ENCODE measurements at regions of chr3 and their contacts with region 1.

Region 1: DNA sequence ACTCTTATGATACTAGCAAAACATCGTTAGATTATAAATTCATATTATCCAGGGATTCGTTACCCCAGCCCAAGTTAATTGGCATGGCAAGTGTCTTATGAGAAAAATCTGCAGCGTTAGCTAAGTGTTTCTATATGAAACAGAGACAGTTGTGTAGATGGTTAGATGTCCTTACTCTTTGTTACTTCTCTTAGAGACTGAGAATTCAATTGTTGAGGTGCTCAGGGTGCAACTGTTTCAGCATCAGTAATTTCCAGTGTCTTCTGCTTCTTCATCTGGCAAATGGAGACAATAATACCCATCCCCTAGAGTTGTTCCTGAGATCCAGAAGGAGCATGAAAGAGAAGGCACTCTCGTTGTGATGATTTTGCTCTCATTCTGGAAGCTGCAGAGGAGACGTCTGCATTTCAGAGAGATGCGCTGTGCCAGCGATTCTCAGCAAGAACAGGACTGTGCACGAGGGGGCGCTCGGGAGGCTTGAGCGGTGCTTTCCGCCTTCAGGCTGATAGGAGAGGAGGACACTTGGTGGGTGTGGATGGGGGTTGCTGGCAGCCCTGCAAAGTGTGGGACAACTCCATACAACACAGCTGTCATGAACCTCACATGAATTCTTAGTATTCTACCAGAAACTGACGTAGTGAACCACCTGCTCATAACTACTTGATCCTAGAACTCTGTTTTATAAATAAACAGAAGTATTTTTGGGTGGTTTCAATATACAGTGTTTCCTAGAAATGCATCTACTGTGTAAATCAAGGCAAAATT is 39.7 kb upstream of the SPSB4 start:
- DNase-seq: peak; percentile 84
- ATAC-seq: peak; percentile 85 to 87
- H3K4me3 ChIP-seq: no peak overlapping the region
- H3K27ac ChIP-seq: no peak overlapping the region
- H3K4me1 ChIP-seq: no peaks in the 10 kb centered on the region
- H3K27me3 ChIP-seq: no peaks in the 10 kb centered on the region
- CTCF ChIP-seq: peak; percentile 69

Region 2: GRCh38 chr3:140378571-140379340 is 632.7 kb before region 1 on chr3:
- intact Hi-C with region 1: no loop called
- DNase-seq: no peak
- ATAC-seq: no peak
- H3K4me3 ChIP-seq: no peak overlapping the region
- H3K27ac ChIP-seq: no peak overlapping the region
- H3K4me1 ChIP-seq: no peaks in the 10 kb centered on the region
- H3K27me3 ChIP-seq: no peaks in the 10 kb centered on the region
- CTCF ChIP-seq: no peak

Region 3: DNA sequence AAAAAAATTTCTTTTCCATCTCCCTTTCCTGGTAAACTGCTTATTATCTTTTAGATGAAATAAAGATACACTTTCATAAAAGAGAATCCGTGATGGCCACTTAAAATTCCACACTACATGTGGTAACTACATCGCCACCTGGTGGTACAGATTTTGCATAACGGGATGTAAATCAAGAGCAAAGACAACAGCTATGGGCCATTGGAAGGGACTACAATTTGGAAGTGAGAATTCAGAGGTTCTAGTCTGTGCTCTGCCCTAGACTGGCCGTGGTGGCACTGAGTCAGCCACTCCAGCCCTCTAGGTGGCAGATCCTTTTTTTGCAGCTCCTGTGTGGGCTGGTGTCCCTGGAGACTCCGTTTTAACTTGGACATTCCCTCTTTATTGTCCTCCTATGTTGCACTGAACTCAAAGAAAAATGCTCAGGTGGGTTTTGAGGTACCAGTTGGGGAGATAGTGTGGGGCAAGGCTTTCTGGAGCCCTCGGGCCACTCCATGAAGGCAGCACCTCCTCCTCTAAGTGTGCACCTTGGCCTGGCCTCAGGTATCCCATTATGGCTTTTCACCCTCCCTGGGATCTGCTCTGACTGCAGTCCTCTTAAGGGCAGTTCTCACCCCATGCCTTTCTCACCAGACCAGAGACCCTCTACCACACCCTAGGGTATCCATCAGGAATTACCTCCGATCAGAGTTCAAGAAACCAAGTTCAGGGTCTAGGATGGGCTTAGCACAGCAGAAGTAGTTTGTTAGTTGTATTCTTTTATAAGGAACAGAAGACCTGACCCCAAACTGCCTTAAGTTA is 94.6 kb after region 1 on chr3:
- intact Hi-C with region 1: loop called (anchors 10 kb)
- DNase-seq: no peak
- ATAC-seq: peak; percentile 39 to 66
- H3K4me3 ChIP-seq: no peak overlapping the region
- H3K27ac ChIP-seq: no peak overlapping the region
- H3K4me1 ChIP-seq: no peaks in the 10 kb centered on the region
- H3K27me3 ChIP-seq: no peaks in the 10 kb centered on the region
- CTCF ChIP-seq: peak; percentile 76

Region 4: GRCh38 chr3:141116721-141117120 is 105.3 kb after region 1 on chr3:
- intact Hi-C with region 1: no loop called
- DNase-seq: no peak
- ATAC-seq: peak in 1 of 2 donors; percentile 34
- H3K4me3 ChIP-seq: no peak overlapping the region
- H3K27ac ChIP-seq: no peak overlapping the region
- H3K4me1 ChIP-seq: no peaks in the 10 kb centered on the region
- H3K27me3 ChIP-seq: no peaks in the 10 kb centered on the region
- CTCF ChIP-seq: no peak

Region 5: DNA sequence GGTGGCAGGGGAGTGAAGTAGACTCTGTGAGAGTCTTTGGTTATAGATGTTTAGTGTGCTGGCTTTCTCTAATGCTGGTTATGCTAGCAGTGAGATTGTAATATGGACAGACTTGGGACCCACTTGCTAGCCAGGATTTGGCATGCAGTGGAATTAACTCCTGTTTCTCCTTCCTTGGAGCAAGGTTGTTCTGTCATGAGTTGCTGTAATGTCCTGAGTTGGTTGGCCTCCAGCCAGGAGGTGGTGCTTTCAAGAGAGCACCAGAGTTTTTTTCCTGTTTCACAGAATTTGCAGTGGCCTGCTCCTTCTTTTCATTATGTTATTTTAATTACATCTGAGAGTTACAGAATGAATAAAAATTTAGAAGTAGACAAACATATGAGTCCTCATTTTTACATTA is 132.1 kb after region 1 on chr3:
- intact Hi-C with region 1: no loop called
- DNase-seq: no peak
- ATAC-seq: no peak
- H3K4me3 ChIP-seq: no peak overlapping the region
- H3K27ac ChIP-seq: no peak overlapping the region
- H3K4me1 ChIP-seq: no peaks in the 10 kb centered on the region
- H3K27me3 ChIP-seq: no peaks in the 10 kb centered on the region
- CTCF ChIP-seq: no peak

Measured in lower lobe of right lung (tissue), 2 donors.